AG04450 (cell line): ENCODE measurements at regions of chr1 and their contacts with region 1.

Region 1: DNA sequence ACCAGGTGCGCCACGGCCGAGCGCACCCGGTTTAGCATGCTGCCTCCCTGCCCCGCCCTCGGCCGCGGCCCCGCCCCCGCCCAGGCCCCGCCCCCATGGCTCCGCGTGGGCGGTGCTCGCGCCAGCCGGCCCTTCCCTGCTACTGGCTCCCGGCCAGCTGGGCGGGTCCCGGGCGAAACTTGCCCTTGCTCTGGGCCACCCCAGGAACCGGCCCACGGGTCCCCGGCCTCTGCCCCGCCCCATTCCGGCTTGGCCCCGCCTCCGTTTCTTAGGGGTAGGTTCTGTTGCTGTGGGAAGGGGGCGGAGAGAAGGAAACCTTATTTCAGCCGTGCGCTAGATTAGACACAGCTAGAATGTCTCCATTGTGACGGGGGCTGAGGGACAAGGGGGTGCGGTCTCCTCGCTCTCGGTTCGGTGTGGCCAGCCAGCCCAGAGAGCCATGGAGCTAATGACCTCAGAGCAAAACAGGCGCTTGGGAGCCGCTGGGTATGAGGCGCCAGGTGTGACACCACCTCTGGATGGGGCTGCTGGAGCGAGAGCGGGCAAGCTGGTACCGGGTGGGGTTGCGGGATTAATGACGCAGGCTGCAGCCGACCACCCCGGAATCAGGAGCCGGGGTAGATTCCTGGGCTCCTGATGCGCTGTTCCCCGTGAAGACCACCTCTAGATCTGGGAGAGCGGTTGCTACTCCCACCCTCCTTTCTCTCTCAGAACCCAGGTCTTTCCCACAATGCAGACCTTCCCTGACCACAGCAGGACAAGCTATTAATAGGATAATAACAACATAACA is at the start of gene PPM1J:
- DNase-seq: peak; percentile 70
- H3K4me3 ChIP-seq: peak within 1 kb of the TSS; percentile 68
- H3K27ac ChIP-seq: peak within 1 kb of the TSS; percentile 39
- H3K27me3 ChIP-seq: peaks cover 3% of the 10 kb centered on the region
- CTCF ChIP-seq: no peak
- polyA plus RNA-seq, gene PPM1J: 1.3 and 2.1 TPM in 2 replicates

Region 2: GRCh38 chr1:112317140-112317539 is 398.3 kb before region 1 on chr1:
- CTCF ChIA-PET with region 1: no interaction called
- POLR2A ChIA-PET with region 1: no interaction called
- DNase-seq: no peak
- H3K4me3 ChIP-seq: no peak overlapping the region
- H3K27ac ChIP-seq: no peak overlapping the region
- H3K27me3 ChIP-seq: peaks cover 15% of the 10 kb centered on the region
- CTCF ChIP-seq: no peak

Region 3: DNA sequence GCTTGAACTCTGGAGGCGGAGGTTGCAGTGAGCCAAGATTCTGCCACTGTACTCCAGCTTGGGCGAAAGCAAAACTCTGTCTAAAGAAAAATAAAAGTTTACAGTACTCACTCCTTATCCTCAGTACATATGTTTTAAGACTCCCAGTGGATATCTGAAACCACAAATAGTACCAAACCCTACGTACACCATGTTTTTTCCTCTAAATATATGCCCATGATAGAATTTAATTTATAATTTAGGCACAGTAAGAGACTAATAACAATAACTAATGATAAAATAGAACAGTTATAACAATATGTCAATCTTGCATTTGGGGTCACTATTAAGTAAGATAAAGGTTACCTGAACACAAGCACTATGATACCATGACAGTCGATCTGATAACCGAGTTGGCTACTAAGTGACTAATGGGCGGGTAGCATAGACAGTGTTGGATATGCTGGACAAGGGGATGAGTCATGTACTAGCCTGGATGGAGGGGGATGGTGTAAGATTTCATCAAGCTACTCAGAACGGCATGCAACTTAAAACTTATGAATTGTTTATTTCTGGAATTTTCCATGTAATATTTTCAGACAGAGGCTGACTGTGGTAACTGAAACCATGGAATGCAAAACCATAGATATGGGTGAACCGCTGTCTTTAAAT is 140.2 kb before region 1 on chr1:
- CTCF ChIA-PET with region 1: no interaction called
- POLR2A ChIA-PET with region 1: no interaction called
- DNase-seq: peak; percentile 83
- H3K4me3 ChIP-seq: no peak overlapping the region
- H3K27ac ChIP-seq: no peak overlapping the region
- H3K27me3 ChIP-seq: no peaks in the 10 kb centered on the region
- CTCF ChIP-seq: no peak

Region 4: GRCh38 chr1:112637254-112638116 is 78.0 kb before region 1 on chr1:
- CTCF ChIA-PET with region 1: no interaction called
- POLR2A ChIA-PET with region 1: no interaction called
- DNase-seq: no peak
- H3K4me3 ChIP-seq: no peak overlapping the region
- H3K27ac ChIP-seq: no peak overlapping the region
- H3K27me3 ChIP-seq: no peaks in the 10 kb centered on the region
- CTCF ChIP-seq: no peak

Region 5: DNA sequence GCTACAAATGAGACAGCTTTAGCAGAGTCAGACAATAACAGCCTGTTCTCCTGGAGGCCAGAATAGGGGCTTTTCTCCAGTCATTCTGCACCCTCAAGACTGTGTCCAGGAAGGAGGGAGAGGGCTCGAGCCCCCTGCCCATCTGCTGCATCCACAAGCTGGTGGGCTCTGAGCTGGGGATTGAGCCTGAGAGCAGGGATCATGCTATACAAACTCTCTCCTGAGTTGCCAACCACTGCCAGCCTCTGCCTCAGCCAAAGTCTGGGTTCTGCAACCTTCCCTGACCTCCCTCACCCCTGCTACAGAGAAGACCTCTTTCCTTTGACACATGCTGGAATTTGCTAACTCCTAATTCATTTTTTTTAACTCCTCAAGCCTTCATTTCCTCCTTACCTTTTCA is 14.4 kb after region 1 on chr1:
- CTCF ChIA-PET with region 1: interaction called, 35 read pairs
- POLR2A ChIA-PET with region 1: no interaction called
- DNase-seq: no peak
- H3K4me3 ChIP-seq: no peak overlapping the region
- H3K27ac ChIP-seq: no peak overlapping the region
- H3K27me3 ChIP-seq: no peaks in the 10 kb centered on the region
- CTCF ChIP-seq: no peak

Region 6: GRCh38 chr1:112754116-112754628 is 38.7 kb after region 1 on chr1:
- CTCF ChIA-PET with region 1: interaction called, 19 read pairs
- POLR2A ChIA-PET with region 1: interaction called, 3 read pairs
- DNase-seq: no peak
- H3K4me3 ChIP-seq: no peak overlapping the region
- H3K27ac ChIP-seq: no peak overlapping the region
- H3K27me3 ChIP-seq: peaks cover 4% of the 10 kb centered on the region
- CTCF ChIP-seq: no peak

Region 7: GRCh38 chr1:112803906-112804762 is 88.7 kb after region 1 on chr1:
- CTCF ChIA-PET with region 1: interaction called, 515 read pairs
- POLR2A ChIA-PET with region 1: interaction called, 9 read pairs
- DNase-seq: peak; percentile 33
- H3K4me3 ChIP-seq: no peak overlapping the region
- H3K27ac ChIP-seq: peak overlapping the region; percentile 11
- H3K27me3 ChIP-seq: peaks cover 16% of the 10 kb centered on the region
- CTCF ChIP-seq: peak; percentile 87

Region 8: DNA sequence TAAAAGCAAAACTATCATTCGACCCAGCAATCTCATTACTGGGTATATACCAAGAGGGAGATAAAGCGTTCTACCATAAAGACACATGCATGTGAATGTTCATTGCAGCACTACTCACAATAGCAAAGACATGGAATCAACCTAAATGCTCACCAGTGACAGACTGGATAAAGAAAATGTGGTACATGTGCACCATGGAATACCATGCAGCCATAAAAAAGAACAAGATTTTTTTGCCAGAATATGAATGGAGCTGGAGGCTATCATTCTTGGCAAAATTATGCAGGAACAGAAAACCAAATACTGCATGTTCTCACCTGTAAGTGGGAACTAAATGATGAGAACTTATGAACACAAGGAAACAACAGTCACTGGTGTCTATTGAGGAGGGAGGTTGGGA is 160.9 kb after region 1 on chr1:
- CTCF ChIA-PET with region 1: interaction called, 13 read pairs
- POLR2A ChIA-PET with region 1: no interaction called
- DNase-seq: no peak
- H3K4me3 ChIP-seq: no peak overlapping the region
- H3K27ac ChIP-seq: no peak overlapping the region
- H3K27me3 ChIP-seq: no peaks in the 10 kb centered on the region
- CTCF ChIP-seq: no peak

Region 9: DNA sequence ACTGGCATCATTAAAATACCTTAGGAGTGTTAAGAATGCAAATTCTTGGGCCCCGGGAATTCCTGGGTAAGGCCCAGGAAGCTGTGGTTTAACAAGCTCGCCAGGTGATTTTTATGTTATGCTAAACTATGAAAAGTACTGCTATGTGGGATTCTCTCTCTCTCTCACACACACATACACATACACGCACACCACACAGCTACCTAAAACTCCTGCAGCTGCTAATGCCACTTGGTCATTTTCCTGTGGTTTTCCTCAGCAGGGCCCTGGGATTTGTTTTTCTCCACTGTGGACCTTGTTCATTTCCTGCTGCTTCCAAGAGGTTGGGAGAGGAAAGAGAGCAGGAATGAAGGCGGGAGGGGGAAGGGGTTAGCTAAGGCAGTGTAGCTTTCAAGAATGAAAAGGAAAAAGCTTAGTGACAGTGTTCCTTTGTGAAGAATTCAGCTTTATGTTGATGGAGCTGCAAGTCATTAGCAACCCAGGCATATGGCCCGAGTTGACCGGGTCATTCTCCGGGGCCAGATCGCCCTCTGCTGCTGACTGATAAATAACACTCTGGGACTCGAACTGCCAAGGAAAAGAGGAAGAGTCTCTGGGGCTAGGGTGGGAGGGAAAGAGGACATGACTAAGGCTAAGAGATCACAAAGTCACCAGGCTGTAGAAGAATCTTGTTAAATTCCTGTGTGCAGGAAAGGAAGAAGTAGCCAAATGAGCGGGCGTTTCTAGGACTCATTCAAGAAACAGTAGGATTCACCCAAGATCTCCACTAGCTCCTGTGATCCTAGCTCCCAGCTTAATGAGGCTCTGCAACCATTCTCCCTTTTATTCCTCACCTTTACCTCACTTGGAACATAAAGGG is 327.1 kb after region 1 on chr1:
- CTCF ChIA-PET with region 1: interaction called, 79 read pairs
- POLR2A ChIA-PET with region 1: no interaction called
- DNase-seq: peak; percentile 46
- H3K4me3 ChIP-seq: no peak overlapping the region
- H3K27ac ChIP-seq: peak overlapping the region; percentile 86
- H3K27me3 ChIP-seq: no peaks in the 10 kb centered on the region
- CTCF ChIP-seq: peak; percentile 61

Region 10: DNA sequence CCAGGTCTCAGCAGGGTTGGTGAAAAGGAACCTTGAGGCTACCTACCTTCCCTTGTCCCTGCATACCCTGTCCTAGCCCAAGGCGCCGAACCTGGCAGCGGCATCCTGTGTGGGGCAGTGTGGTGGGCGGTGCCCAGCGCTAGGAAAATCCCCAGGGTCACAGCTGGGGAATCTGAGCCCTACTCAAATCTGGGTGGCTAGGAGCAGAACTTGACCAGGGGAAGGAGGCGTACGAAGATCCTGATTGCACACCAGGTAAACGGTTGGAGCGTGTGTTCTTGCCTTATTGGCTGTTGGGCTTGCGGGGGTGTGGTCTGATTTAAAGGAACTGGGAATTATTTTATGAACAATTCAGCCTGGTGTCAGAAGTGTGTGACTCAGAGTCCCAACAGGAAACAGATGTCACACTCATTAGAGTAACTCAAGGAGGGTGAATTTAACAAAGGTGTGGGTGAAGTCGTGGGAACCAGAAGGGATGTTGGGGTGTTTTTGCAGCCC is 476.2 kb after region 1 on chr1:
- CTCF ChIA-PET with region 1: no interaction called
- POLR2A ChIA-PET with region 1: no interaction called
- DNase-seq: no peak
- H3K4me3 ChIP-seq: no peak overlapping the region
- H3K27ac ChIP-seq: no peak overlapping the region
- H3K27me3 ChIP-seq: peaks cover 14% of the 10 kb centered on the region
- CTCF ChIP-seq: no peak